A549 (cell line): ENCODE measurements at regions of chr7 and their contacts with region 1.

Region 1: DNA sequence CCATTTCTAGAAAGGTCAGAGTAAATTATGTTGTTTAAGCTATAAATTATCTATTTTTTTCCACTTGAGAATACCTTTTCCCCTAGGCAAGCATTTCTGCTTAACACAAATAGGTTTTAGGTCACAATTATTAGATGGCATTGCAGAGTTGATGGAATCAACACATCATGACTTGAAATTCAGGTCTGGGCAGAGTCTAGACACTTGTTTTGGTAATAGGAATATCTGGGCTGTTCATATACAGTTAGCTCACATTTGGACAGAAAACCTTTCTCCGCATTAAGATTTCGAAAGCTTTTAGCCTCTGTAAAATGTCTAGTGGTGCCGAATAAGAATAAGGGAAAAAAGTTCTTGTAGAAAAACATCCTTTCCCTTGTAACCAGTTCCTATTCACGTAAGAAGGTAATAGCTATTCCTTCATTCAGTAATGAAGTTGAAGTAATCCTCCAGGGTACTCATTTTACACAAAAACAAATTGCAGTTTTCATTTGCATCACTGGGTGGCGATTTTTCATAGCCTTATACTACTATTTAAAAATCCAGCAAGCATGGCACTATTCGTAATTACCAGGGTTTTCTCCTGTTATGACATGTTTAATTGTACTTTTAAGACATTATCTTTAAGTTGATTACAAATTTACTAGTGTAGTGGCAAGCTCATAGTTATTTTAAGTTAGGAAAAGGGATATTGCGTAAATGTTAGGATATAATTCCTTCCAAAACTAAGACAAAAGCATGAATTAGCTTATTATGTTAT is 37.0 kb downstream of the RPA3 start:
- DNase-seq: peak; percentile 18 to 58
- ATAC-seq: peak; percentile 80 to 85
- H3K4me3 ChIP-seq: no peak overlapping the region
- H3K27ac ChIP-seq: no peak overlapping the region
- H3K4me1 ChIP-seq: peaks cover 5% of the 10 kb centered on the region; the same call in 1 of the 3 replicates
- CTCF ChIP-seq: peak; percentile 83
- EP300 ChIP-seq: no peak
- POLR2A ChIP-seq: no peak
- RAD21 ChIP-seq: peak; percentile 85 to 86

Region 2: DNA sequence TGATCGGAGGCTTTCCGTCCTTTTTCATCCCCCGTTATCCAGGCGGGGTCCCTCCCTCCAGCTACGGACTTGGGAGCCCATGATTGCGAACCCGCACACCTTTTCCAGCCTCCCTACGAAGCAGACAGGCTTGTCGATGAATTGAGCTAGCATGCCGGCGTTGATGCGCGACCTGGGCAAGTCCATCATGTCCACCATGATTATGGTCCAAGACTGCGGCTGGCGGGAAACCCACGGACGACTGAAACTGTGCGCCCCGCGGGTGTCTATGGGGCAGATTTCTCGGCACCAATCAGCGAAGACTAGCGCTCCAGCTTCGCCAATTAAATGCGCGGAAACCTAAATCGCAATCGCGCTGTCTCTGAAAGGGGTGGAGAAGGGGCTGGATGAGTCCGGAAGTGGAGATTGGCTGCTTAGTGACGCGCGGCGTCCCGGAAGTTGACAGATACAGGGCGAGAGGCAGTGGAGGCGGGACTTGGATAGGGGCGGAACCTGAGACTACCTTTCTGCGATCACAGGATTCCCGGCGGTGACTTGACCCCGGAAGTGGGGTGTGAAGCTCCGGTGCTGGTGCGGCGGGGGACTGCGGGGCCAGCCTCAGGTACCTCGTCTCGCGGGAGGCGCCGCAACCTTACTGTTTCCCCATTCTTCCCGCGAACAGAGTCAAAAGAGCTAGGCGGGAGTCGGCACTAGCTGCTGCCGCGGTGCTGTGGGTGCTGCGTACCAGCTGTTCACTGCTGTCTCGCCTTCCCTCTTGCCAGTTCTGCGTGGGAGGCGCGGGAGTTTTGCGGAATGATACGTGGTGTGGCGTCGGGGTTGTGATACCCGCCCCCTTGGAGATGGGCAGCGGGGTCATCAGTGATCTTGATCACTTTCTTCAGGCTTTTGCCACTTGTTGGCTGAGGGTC is 40.9 kb before region 1 on chr7 and contains the start of gene UMAD1:
- CTCF ChIA-PET with region 1: interaction called, 11 read pairs
- POLR2A ChIA-PET with region 1: interaction called, 6 read pairs
- DNase-seq: peak; percentile 93 to 99
- ATAC-seq: peak; percentile 98 to 99
- H3K4me3 ChIP-seq: peak within 1 kb of the TSS; percentile 89
- H3K27ac ChIP-seq: peak within 1 kb of the TSS; percentile 81 to 91
- H3K4me1 ChIP-seq: peaks cover 17% of the 10 kb centered on the region; the same call in 2 of the 3 replicates
- CTCF ChIP-seq: no peak
- EP300 ChIP-seq: no peak
- POLR2A ChIP-seq: peak; percentile 85
- RAD21 ChIP-seq: no peak
- polyA plus RNA-seq, gene UMAD1: 36.2 and 46.4 TPM in 2 replicates

Region 3: GRCh38 chr7:7696458-7697119 is 15.2 kb after region 1 on chr7:
- CTCF ChIA-PET with region 1: interaction called, 32 read pairs
- POLR2A ChIA-PET with region 1: interaction called, 3 read pairs
- DNase-seq: no peak
- ATAC-seq: peak; percentile 39 to 76; a peak in 3 of 6 replicates
- H3K4me3 ChIP-seq: no peak overlapping the region
- H3K27ac ChIP-seq: peak overlapping the region; percentile 4 to 58; a peak in 4 of 6 replicates
- H3K4me1 ChIP-seq: peaks cover 37% of the 10 kb centered on the region
- CTCF ChIP-seq: no peak
- EP300 ChIP-seq: no peak
- POLR2A ChIP-seq: no peak
- RAD21 ChIP-seq: no peak

Region 4: GRCh38 chr7:7719236-7719635 is 37.9 kb after region 1 on chr7:
- CTCF ChIA-PET with region 1: interaction called, 11 read pairs
- POLR2A ChIA-PET with region 1: no interaction called
- DNase-seq: peak in 1 of 2 experiments; percentile 35
- ATAC-seq: peak; percentile 32 to 89; a peak in 5 of 6 replicates
- H3K4me3 ChIP-seq: no peak overlapping the region
- H3K27ac ChIP-seq: peak overlapping the region; percentile 12 to 30; a peak in 3 of 6 replicates
- H3K4me1 ChIP-seq: peaks cover 19% of the 10 kb centered on the region
- CTCF ChIP-seq: no peak
- EP300 ChIP-seq: no peak
- POLR2A ChIP-seq: no peak
- RAD21 ChIP-seq: no peak

Region 5: DNA sequence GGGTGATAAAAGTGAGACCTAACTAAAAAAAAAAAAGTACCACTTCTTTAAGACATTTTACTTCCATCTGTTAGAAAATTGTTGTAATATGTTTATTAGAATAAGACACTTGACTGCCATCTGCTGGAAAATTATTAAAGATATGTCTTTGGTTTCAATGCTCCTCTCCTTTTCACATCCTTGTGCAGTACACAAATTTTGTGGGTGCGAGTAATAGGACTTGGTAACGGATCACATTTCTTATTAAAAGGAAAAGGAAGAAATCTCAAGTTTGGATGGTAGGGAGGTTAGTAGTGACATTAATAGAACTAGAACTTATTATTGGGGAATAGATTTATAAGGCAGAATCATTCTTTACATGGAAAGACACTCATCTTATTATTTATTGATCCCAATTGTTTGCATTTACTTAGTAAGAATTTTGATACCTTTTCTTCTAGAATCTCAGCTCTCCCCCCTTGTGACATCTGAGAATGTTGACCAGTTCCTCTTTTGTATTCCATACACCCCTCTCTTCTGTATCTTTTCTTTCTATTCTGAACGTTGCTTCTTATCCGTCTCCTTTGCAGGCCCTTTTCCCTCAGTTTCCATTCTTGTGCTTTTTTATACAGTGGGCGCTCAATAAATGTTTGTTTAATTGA is 80.1 kb after region 1 on chr7:
- CTCF ChIA-PET with region 1: interaction called, 68 read pairs
- POLR2A ChIA-PET with region 1: no interaction called
- DNase-seq: peak; percentile 12 to 60
- ATAC-seq: peak in 1 of 2 experiments; percentile 78; a peak in 3 of 6 replicates
- H3K4me3 ChIP-seq: peak overlapping the region; percentile 32
- H3K27ac ChIP-seq: peak overlapping the region; percentile 20 to 71; a peak in 3 of 6 replicates
- H3K4me1 ChIP-seq: peaks cover 40% of the 10 kb centered on the region
- CTCF ChIP-seq: peak; percentile 62
- EP300 ChIP-seq: no peak
- POLR2A ChIP-seq: no peak
- RAD21 ChIP-seq: peak; percentile 62 to 71

Region 6: DNA sequence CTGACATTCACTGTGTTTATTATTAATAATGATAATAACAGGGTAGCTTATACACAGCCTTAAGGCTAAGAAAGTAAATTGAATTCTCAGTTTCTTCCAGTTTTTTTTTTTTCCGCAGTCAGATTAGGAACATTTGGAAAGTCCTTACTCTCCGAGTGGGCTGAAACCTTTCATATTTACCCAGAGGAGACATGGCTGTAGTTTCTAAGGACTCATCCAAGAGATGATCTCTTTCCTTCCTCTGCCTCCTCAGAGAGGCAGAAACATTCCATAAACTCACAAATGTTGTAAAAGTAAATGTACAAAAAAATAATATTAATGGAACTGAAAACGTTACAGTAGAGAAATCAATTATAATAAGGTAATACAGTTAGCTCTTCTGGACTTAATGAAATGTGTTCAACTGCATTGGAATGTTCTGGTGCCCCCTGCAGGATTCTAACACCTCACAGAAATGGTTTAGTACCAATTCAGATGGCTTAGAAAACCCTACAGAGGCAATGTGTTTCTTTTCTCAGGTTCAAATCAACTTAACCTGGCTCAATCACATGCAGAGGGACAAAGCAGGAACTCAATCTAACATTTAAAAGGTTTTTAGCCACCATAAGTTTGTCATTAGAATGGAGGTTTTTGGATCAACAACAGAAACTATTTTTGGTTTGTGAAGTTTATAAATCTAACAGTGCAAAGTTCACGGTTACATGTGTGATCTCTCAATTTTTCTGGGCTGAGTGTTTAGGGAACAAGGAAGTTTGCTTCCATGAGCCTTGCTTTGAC is 508.9 kb after region 1 on chr7:
- CTCF ChIA-PET with region 1: interaction called, 16 read pairs
- POLR2A ChIA-PET with region 1: no interaction called
- DNase-seq: peak in 1 of 2 experiments; percentile 43
- ATAC-seq: peak; percentile 71 to 80
- H3K4me3 ChIP-seq: no peak overlapping the region
- H3K27ac ChIP-seq: no peak overlapping the region
- H3K4me1 ChIP-seq: no peaks in the 10 kb centered on the region
- CTCF ChIP-seq: peak; percentile 76
- EP300 ChIP-seq: no peak
- POLR2A ChIP-seq: no peak
- RAD21 ChIP-seq: peak; percentile 70 to 74

Region 7: DNA sequence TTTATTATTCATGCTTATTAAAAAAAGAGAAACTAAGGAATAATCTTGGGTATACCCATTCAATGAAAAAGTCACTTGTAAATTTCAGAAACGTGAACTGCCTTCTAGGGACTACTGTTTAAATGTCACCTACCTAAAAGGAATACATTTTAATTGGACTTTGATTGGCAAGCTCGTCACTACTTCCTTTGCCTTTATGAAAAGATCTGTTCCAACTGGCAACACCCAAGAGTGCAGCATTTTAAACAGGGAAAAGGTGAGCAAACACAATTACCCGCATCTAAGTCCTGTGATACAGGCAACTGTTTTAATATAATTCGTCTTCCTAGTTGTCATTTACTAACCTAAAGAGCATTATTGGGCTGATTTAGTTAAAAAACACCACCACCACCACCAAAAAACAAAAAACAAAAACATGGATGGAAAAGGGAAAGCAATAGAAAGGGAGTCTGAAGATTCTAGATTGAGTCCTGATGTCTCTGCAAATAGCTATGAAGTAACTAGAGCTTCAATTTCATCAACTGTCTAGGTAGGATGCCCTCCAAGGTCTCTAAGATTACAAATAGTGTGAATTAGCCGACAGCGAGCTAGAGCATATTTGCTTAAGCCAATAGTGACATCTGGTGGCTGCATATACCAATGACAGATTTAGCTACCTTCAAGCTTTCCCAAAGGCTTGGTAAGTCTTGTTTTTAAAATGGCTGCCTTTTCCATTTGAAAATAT is 614.4 kb after region 1 on chr7:
- CTCF ChIA-PET with region 1: interaction called, 13 read pairs
- POLR2A ChIA-PET with region 1: no interaction called
- DNase-seq: peak; percentile 64 to 89
- ATAC-seq: peak; percentile 97 to 98
- H3K4me3 ChIP-seq: no peak overlapping the region
- H3K27ac ChIP-seq: no peak overlapping the region
- H3K4me1 ChIP-seq: no peaks in the 10 kb centered on the region
- CTCF ChIP-seq: peak; percentile 85
- EP300 ChIP-seq: no peak
- POLR2A ChIP-seq: no peak
- RAD21 ChIP-seq: peak; percentile 83 to 85